Activated CD4-positive, alpha-beta memory T cell treated with anti-CD3 and anti-CD28 coated beads for 36 hours (primary cell): ENCODE measurements at regions of chr15 and their contacts with region 1.

Region 1: DNA sequence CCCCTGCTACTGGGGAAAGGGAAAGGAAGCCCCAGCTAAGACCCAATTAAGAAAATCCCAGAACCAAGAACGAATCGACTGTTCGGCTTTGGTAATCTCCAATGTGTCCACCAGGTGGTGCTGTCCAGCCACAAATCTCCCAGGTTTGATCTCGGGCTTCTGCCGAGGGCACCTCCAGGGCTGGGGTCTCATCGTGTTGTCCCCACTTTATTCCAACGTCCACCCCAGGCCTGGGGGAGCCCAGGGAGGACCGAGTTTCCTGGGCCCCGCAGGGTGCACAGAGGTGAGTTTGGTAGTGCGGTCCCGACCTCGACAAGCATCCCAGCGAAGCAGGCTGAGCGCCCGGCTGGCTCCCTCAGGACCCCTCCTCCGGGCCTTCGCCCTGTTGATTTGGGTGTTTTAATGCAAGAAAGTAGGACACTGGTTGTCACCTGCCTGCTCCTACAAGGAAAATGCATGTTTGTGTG is 185.1 kb downstream of the GOLGA6L6 start:
- DNase-seq: peak; percentile 83
- H3K4me3 Mint-ChIP-seq: no peak overlapping the region
- H3K27ac Mint-ChIP-seq: no peak overlapping the region
- H3K4me1 Mint-ChIP-seq: peaks cover 4% of the 10 kb centered on the region
- H3K27me3 Mint-ChIP-seq: no peaks in the 10 kb centered on the region

Region 2: GRCh38 chr15:20367093-20367492 is 10.6 kb after region 1 on chr15:
- CTCF ChIA-PET with region 1: interaction called, 13 read pairs
- POLR2A ChIA-PET with region 1: no interaction called
- intact Hi-C with region 1: no loop called
- DNase-seq: no peak
- H3K4me3 Mint-ChIP-seq: no peak overlapping the region
- H3K27ac Mint-ChIP-seq: no peak overlapping the region
- H3K4me1 Mint-ChIP-seq: no peaks in the 10 kb centered on the region
- H3K27me3 Mint-ChIP-seq: no peaks in the 10 kb centered on the region

Region 3: DNA sequence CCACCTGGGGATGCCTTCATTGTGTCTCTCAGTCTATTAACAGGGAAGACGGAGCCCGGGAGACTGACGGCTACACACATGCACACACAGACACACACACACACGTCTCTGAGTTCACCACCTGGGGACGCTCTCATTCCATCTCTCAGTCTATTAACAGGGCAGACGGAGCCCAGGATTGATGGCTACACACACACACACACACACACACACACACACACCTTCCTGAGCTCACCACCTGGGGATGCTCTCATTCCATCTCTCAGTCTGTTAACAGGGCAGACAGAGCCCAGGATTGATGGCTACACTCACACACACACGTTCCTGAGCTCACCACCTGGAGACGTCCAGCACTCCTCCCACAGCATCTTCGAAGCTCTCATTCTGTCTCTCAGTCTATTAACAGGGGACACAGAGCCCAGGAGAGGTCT is 1867.8 kb after region 1 on chr15:
- CTCF ChIA-PET with region 1: interaction called, 92 read pairs
- POLR2A ChIA-PET with region 1: no interaction called
- intact Hi-C with region 1: no loop called
- DNase-seq: peak; percentile 26
- H3K4me3 Mint-ChIP-seq: no peak overlapping the region
- H3K27ac Mint-ChIP-seq: no peak overlapping the region
- H3K4me1 Mint-ChIP-seq: peaks cover 19% of the 10 kb centered on the region
- H3K27me3 Mint-ChIP-seq: no peaks in the 10 kb centered on the region